Ascending aorta (tissue), 2 donors: ENCODE measurements at regions of chr17 and their contacts with region 1.

Region 1: GRCh38 chr17:8300627-8301242 is 5.5 kb upstream of the SLC25A35 start:
- DNase-seq: peak; percentile 20 to 70
- H3K4me3 ChIP-seq: no peak overlapping the region
- H3K27ac ChIP-seq: no peak overlapping the region
- H3K4me1 ChIP-seq: no peaks in the 10 kb centered on the region
- H3K27me3 ChIP-seq: no peaks in the 10 kb centered on the region
- CTCF ChIP-seq: peak; percentile 59 to 83 (median 76)

Region 2: GRCh38 chr17:8057691-8058114 is 243.0 kb before region 1 on chr17:
- intact Hi-C with region 1: loop called (anchors 1 kb)
- DNase-seq: peak in 1 of 2 donors; percentile 74
- H3K4me3 ChIP-seq: no peak overlapping the region
- H3K27ac ChIP-seq: no peak overlapping the region
- H3K4me1 ChIP-seq: peaks cover 0 to 3% of the 10 kb centered on the region in 2 donors
- H3K27me3 ChIP-seq: peaks cover 8% of the 10 kb centered on the region
- CTCF ChIP-seq: peak; percentile 69 to 78 (median 74)

Region 3: DNA sequence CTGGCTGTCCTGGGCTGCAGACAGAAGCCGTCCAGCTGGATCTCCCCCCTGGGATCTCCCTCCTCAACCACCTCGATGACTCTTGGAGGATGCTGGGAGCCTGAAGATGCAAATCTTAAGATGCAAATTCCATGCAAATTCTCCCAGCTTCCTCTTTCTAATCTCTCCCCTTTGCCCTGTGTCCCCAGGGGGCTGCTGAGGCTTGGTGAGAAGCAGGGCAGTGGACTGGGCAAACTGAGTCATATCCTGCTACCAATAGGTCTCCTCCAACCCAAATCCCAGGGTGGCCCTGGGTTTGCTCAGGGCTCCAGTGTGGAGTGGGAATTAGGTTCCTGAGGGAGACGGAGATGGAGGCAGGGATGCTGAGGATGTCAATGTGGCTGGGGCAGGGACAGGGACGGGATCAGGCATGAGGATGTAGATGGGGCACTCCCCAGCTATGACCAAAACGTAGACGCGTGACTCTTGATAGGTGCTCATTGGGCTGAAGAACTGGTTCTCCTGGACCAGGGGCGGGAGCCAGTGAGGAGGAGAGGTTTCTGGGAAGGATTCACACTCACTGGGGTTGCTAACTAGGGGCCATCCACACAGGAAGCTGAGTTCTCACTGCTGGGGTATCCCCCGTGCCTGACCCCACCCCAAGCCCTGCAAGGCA is 209.6 kb before region 1 on chr17:
- intact Hi-C with region 1: loop called (anchors 5 kb)
- DNase-seq: no peak
- H3K4me3 ChIP-seq: no peak overlapping the region
- H3K27ac ChIP-seq: no peak overlapping the region
- H3K4me1 ChIP-seq: no peaks in the 10 kb centered on the region
- H3K27me3 ChIP-seq: no peaks in the 10 kb centered on the region
- CTCF ChIP-seq: no peak